ENCODE measurements at regions of chr2 and their contacts with region 1.

Region 1: DNA sequence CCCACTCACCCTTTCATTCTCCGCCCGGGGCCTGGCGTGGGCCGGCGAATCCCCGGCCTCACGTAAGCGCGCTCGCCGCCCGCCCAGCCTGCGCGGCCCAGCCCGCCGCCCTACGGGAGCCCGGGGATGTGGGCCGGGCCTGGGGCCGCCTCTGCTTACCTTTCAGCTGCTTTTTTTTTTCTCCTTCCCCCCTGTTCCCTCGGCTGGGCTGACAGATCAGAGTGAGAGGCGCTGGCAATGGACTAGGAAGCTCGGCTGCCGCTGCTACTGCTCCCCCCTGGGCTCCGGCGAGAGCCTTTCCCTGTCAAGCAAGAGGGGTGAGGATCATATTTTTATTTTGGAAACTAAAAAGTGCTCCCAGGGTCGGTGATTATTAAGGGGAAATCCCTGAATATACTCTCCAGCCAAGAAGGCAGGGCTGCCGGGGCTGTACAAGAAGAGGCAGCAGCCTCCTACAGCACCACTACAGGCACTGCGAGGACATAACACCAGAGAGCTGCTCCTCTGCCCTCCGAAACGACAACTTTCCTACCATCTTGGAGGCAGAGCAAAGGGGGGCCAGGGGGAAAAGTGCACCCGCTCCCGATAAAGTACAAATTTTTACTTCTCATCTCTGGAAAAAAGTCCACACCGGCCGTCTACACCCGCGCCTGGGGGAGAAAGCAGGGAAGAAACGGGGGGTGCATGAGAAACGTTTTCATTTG is at the start of gene INO80D:
- DNase-seq: peak; percentile 76
- ATAC-seq: peak; percentile 89
- H3K4me3 Mint-ChIP-seq: peak within 1 kb of the TSS; percentile 99
- H3K27ac Mint-ChIP-seq: peak within 1 kb of the TSS; percentile 100
- H3K4me1 Mint-ChIP-seq: peaks cover 42% of the 10 kb centered on the region
- H3K27me3 Mint-ChIP-seq: no peaks in the 10 kb centered on the region
- CTCF ChIP-seq: no peak
- total RNA-seq, gene INO80D: 52.1 and 53.1 TPM in 2 replicates

Region 2: DNA sequence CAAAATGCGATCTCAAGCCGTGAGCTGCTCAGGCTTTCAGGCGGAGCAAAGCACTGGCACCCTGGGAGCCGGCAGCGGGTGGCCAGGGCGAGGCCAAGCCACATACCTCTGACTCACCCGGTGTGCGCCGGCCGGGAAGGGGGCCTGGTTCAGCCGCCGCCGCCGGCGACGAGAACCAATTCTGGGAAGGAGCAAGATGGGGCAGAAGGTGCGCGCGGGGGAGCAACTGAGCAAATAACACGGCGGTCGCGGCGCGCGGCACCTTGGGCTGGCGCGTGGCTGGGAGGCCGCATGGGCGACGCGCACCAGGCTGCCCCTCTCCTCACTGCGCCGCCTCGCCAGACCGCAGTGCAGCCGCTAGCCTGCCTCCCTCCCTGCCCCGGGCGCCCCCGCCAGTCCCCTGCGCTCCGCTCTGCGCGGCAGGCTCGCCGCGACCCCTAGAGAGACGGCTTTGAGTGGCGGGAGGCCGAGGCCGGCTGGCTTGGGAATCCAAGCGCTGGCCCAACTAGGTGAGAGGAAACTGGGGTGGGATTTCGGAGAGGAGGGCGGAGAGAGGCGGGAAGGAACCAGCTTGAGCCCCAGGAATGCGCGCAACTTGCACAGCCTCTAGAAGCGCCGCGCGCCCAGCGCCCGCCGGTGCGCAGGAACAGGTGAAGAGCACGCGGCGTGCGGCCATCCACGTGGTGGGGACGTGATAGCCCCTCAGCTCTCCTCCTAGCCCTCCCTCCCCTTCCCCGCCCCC is 400.4 kb before region 1 on chr2:
- CTCF ChIA-PET with region 1: no interaction called
- POLR2A ChIA-PET with region 1: no interaction called
- intact Hi-C with region 1: loop called (anchors 2 kb)
- DNase-seq: peak; percentile 29
- ATAC-seq: no peak
- H3K4me3 Mint-ChIP-seq: peak overlapping the region; percentile 90
- H3K27ac Mint-ChIP-seq: peak overlapping the region; percentile 61
- H3K4me1 Mint-ChIP-seq: peaks cover 53% of the 10 kb centered on the region
- H3K27me3 Mint-ChIP-seq: peaks cover 37% of the 10 kb centered on the region
- CTCF ChIP-seq: no peak

Region 3: GRCh38 chr2:205706769-205707381 is 379.0 kb before region 1 on chr2:
- CTCF ChIA-PET with region 1: no interaction called
- POLR2A ChIA-PET with region 1: interaction called, 11 read pairs
- intact Hi-C with region 1: loop called (anchors 5 kb)
- DNase-seq: peak; percentile 60
- ATAC-seq: peak; percentile 95
- H3K4me3 Mint-ChIP-seq: peak overlapping the region; percentile 65
- H3K27ac Mint-ChIP-seq: peak overlapping the region; percentile 99
- H3K4me1 Mint-ChIP-seq: peaks cover 63% of the 10 kb centered on the region
- H3K27me3 Mint-ChIP-seq: no peaks in the 10 kb centered on the region
- CTCF ChIP-seq: no peak

Region 4: DNA sequence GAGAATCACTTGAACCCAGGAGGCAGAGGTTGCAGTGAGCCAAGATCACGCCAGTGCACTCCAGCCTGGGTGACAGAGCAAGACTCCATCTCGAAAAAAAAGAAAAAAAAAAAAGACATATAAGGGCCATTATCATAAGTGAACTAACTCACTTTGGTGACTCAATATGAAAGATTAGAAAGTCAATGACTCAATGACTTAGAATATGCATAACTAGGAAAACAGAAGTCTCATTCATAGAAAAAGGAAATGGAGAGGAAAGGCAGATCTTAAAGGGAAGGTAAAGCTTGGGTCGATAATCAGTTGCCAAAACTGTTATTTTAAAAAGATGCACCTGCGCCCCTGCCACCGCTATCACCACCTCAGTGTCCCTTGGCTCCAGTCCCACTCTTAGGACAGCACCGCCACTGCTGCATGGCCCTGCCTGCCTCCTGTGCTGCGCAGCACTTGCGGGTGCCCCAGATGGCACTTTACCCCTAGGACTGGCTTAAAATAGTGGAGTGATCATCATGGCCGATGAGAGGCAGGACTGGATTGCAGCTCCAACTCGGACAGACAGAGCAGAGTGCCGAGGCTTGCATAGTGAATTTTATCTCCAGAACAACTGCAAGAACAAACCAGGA is 54.6 kb before region 1 on chr2:
- CTCF ChIA-PET with region 1: no interaction called
- POLR2A ChIA-PET with region 1: interaction called, 3 read pairs
- intact Hi-C with region 1: loop called (anchors 2 kb)
- DNase-seq: no peak
- ATAC-seq: peak; percentile 49
- H3K4me3 Mint-ChIP-seq: no peak overlapping the region
- H3K27ac Mint-ChIP-seq: no peak overlapping the region
- H3K4me1 Mint-ChIP-seq: peaks cover 34% of the 10 kb centered on the region
- H3K27me3 Mint-ChIP-seq: no peaks in the 10 kb centered on the region
- CTCF ChIP-seq: no peak

Region 5: DNA sequence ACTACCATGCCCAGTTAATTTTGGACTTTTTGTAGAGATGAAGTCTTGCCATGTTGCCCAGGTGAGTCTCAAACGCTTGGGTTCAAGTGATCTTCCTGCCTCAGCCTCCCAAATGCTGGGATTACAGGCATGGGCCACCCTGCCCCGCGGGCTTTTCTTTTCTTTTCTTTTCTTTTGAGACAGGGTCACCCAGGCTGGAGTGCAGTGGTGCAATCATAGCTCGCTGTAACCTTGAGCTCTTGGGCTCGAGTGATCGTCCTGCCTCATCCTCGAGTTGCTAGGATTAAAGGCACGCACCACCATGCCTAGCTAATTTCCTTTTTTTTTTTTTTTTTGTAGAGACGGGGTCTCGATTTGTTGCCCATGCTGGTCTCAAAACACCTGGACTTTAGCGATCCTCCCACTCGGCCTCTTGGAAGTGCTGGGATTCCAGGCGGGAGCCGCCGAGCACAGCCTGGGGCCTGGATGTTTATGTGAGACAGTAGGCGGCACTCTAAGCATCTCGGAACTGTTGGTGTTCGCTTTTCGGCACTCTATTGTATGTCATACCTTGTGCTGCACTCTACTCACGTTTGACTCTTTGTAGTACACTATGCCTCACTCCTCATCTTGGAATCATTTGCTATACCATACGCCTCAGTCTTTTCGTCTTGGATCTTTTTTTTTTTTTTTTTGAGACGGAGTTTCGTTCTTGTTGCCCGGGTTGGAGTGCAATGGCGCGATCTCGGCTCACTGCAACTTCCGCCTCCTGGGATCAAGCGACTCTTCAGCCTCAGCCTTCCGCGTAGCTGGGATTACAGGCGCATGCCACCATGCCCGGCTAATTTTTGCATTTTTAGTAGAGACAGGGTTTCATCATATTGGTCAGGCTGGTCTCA is 164.1 kb after region 1 on chr2:
- CTCF ChIA-PET with region 1: no interaction called
- POLR2A ChIA-PET with region 1: no interaction called
- intact Hi-C with region 1: loop called (anchors 1 kb)
- DNase-seq: no peak
- ATAC-seq: no peak
- H3K4me3 Mint-ChIP-seq: peak overlapping the region; percentile 77
- H3K27ac Mint-ChIP-seq: no peak overlapping the region
- H3K4me1 Mint-ChIP-seq: peaks cover 29% of the 10 kb centered on the region
- H3K27me3 Mint-ChIP-seq: peaks cover 29% of the 10 kb centered on the region
- CTCF ChIP-seq: no peak

Region 6: GRCh38 chr2:206274434-206275268 is 188.8 kb after region 1 on chr2 and contains the start of gene ZDBF2:
- CTCF ChIA-PET with region 1: no interaction called
- POLR2A ChIA-PET with region 1: interaction called, 4 read pairs
- intact Hi-C with region 1: loop called (anchors 5 kb)
- DNase-seq: peak; percentile 58
- ATAC-seq: peak; percentile 86
- H3K4me3 Mint-ChIP-seq: peak within 1 kb of the TSS; percentile 84
- H3K27ac Mint-ChIP-seq: peak within 1 kb of the TSS; percentile 69
- H3K4me1 Mint-ChIP-seq: peaks cover 18% of the 10 kb centered on the region
- H3K27me3 Mint-ChIP-seq: peaks cover 43% of the 10 kb centered on the region
- CTCF ChIP-seq: no peak
- total RNA-seq, gene ZDBF2: 6.7 and 8.0 TPM in 2 replicates

Region 7: DNA sequence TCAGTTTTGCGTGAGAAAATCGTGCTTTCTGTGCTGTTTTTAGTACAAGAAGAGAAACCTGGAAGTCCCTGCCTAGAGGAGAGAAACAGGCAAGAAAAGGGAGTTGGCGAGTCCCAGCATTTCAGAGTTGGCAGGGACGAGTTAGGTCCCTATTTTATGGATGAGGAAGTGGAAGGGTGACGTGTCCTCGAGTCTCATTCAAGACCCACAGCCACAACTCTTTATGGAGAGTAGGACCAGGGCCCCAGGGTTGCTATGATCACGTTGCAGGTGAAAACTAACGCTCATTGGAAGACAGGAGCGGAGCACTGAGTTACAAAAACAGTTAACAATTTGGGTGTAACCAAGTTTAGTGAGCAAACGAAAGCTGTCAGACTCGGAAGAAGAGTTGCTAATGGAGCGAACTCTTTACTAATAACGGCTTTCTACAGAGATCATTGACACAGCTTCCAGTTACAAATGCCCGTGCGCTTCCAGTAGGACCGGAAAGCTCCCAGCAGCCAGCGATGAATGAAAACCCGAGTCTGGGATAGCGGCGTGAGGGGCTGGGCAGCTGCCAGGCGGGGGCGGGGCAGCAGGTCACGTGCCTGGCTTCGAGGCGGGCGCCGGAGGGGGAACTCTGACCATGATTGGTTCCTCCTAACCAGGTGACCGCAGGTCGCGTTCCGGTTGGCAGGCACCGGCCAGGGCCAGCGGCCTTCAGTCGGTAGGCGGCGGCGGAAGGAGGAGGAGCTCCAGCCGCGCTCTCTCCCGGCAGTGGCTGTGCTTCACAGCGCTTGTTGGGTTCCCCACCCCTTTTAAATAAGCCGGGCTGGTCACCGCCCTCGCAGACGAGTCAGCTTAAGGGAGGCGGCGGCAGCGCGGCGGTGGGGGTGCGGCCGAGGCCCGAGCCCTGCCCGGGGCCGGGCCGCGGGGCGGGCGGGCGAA is 1625.2 kb after region 1 on chr2 and contains the start of gene CCNYL1:
- CTCF ChIA-PET with region 1: no interaction called
- POLR2A ChIA-PET with region 1: no interaction called
- intact Hi-C with region 1: loop called (anchors 1 kb)
- DNase-seq: peak; percentile 92
- ATAC-seq: peak; percentile 95
- H3K4me3 Mint-ChIP-seq: peak within 1 kb of the TSS; percentile 95
- H3K27ac Mint-ChIP-seq: peak within 1 kb of the TSS; percentile 85
- H3K4me1 Mint-ChIP-seq: peaks cover 23% of the 10 kb centered on the region
- H3K27me3 Mint-ChIP-seq: no peaks in the 10 kb centered on the region
- CTCF ChIP-seq: no peak
- total RNA-seq, gene CCNYL1: 12.2 and 13.5 TPM in 2 replicates